ENCODE measurements at regions of chr4 and their contacts with region 1.

Region 1: DNA sequence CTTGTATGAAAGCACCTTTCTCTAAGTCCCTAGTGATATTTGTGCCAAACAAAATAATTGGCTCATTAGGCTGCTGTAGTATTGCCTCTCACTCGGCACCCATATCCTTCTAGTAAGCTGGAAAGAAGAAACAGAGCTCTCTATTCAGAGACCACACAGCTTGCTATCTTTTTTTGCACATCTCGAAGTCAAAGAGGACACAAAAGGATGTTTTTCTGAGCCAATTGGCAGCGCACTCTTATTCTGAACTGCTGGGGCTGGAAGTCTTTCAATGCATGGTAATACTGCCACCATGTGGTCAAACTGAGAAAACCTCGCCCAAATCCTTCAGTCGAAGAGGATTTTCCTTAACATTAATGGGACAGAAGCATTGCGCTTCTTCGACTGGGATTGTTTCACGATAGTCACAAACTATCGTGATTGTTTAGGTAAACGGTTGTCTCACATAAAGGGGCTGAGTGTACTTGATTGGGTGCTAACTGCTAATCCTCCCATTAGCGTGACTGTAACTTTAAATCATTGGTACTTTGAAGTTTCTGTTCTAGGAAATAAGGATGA is 572.0 kb upstream of the LCORL start:
- DNase-seq: peak; percentile 76
- ATAC-seq: peak; percentile 55
- H3K4me3 ChIP-seq: no peak overlapping the region
- H3K27ac ChIP-seq: no peak overlapping the region
- H3K4me1 ChIP-seq: no peaks in the 10 kb centered on the region
- H3K27me3 ChIP-seq: peaks cover 14% of the 10 kb centered on the region
- CTCF ChIP-seq: peak; percentile 80

Region 2: DNA sequence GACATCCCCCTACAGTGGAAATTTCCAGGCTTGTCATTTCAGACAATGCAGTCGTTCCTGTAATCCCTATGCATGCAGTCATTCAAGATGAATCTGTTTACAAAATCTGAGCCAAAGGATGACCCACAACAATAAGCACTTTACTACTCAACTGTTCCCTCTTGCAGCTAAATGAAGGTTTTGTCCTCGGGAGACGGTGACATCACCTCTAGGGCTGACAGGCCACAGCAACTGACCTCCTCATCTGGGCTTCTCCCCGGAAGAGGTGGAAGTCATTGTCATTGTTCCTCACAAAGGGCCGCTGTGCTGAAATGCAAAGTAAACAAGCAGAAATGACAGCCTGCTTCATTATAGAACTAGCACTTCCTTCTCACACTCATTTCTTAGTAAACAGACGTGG is 1049.3 kb before region 1 on chr4:
- CTCF ChIA-PET with region 1: no interaction called
- POLR2A ChIA-PET with region 1: no interaction called
- intact Hi-C with region 1: loop called (anchors 10 kb)
- DNase-seq: peak; percentile 42
- ATAC-seq: peak; percentile 76
- H3K4me3 ChIP-seq: no peak overlapping the region
- H3K27ac ChIP-seq: no peak overlapping the region
- H3K4me1 ChIP-seq: peaks cover 2% of the 10 kb centered on the region; the same call in 1 of the 2 replicates
- H3K27me3 ChIP-seq: no peaks in the 10 kb centered on the region
- CTCF ChIP-seq: no peak

Region 3: GRCh38 chr4:17817020-17817419 is 776.5 kb before region 1 on chr4:
- CTCF ChIA-PET with region 1: no interaction called
- POLR2A ChIA-PET with region 1: no interaction called
- intact Hi-C with region 1: loop called (anchors 1 kb)
- DNase-seq: peak; percentile 48
- ATAC-seq: peak; percentile 71
- H3K4me3 ChIP-seq: no peak overlapping the region
- H3K27ac ChIP-seq: no peak overlapping the region
- H3K4me1 ChIP-seq: peaks cover 8% of the 10 kb centered on the region; the same call in 1 of the 2 replicates
- H3K27me3 ChIP-seq: no peaks in the 10 kb centered on the region
- CTCF ChIP-seq: peak; percentile 57

Region 4: DNA sequence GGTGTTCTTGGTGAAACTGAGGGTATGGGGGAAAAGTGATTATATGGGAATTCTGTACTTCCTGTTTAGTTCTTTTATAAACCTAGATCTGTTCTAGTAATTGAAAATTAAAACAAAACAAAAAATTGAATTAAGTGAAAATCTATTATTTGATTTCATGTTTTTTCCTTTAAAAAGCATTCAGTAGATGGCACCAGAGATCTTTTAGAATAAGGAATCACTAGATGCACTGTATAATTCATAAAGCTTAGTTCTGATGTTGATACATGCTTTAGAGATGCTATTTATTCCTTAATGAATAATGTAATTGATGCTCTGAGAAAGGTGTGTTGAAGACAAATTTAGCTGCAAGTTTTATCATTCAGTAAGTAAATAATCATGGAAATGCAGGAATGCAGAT is 659.2 kb before region 1 on chr4:
- CTCF ChIA-PET with region 1: no interaction called
- POLR2A ChIA-PET with region 1: no interaction called
- intact Hi-C with region 1: loop called (anchors 1 kb)
- DNase-seq: no peak
- ATAC-seq: no peak
- H3K4me3 ChIP-seq: no peak overlapping the region
- H3K27ac ChIP-seq: no peak overlapping the region
- H3K4me1 ChIP-seq: no peaks in the 10 kb centered on the region
- H3K27me3 ChIP-seq: no peaks in the 10 kb centered on the region
- CTCF ChIP-seq: peak; percentile 46; the same call in 1 of the 2 replicates

Region 5: DNA sequence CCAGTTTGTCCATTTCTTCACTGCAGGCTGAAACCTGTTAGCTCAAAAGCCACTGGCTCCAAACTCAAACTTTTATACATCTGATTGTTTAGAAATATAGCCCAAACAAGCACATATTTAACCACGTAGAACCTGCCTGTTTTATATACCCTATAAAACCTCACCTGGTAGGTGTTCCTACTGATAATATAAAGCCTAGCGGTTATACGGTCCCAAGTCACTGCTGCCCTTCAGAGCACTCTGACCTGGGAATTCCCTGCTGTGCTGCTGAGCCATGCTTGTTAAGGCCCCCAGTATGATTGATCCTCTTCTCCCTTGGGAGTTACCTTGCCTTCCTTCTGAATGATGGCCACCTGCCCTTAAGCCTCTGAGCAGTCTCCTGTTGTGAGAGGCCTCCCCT is 139.2 kb before region 1 on chr4:
- CTCF ChIA-PET with region 1: no interaction called
- POLR2A ChIA-PET with region 1: no interaction called
- intact Hi-C with region 1: no loop called
- DNase-seq: no peak
- ATAC-seq: no peak
- H3K4me3 ChIP-seq: no peak overlapping the region
- H3K27ac ChIP-seq: no peak overlapping the region
- H3K4me1 ChIP-seq: no peaks in the 10 kb centered on the region
- H3K27me3 ChIP-seq: 0 out of 2 replicates have a peak, but pooled peaks cover 3% of the 10 kb centered on the region
- CTCF ChIP-seq: no peak

Measured in PC-3 (cell line).